ENCODE measurements at regions of chr2 and their contacts with region 1.

Region 1: GRCh38 chr2:189115126-189115525 is 64.4 kb downstream of the COL5A2 start:
- DNase-seq: no peak
- H3K4me3 ChIP-seq: no peak overlapping the region
- H3K27ac ChIP-seq: no peak overlapping the region
- H3K4me1 ChIP-seq: no peaks in the 10 kb centered on the region
- H3K27me3 ChIP-seq: no peaks in the 10 kb centered on the region
- CTCF ChIP-seq: no peak
- EP300 ChIP-seq: no peak
- POLR2A ChIP-seq: no peak
- RAD21 ChIP-seq: peak in 1 of 2 experiments; percentile 14; a peak in 2 of 4 replicates

Region 2: GRCh38 chr2:189129971-189130370 is 14.8 kb after region 1 on chr2:
- CTCF ChIA-PET with region 1: no interaction called
- POLR2A ChIA-PET with region 1: no interaction called
- DNase-seq: no peak
- H3K4me3 ChIP-seq: no peak overlapping the region
- H3K27ac ChIP-seq: no peak overlapping the region
- H3K4me1 ChIP-seq: no peaks in the 10 kb centered on the region
- H3K27me3 ChIP-seq: no peaks in the 10 kb centered on the region
- CTCF ChIP-seq: no peak
- EP300 ChIP-seq: no peak
- POLR2A ChIP-seq: no peak
- RAD21 ChIP-seq: no peak

Region 3: GRCh38 chr2:189318761-189319160 is 203.6 kb after region 1 on chr2:
- CTCF ChIA-PET with region 1: no interaction called
- POLR2A ChIA-PET with region 1: no interaction called
- DNase-seq: no peak
- H3K4me3 ChIP-seq: no peak overlapping the region
- H3K27ac ChIP-seq: no peak overlapping the region
- H3K4me1 ChIP-seq: no peaks in the 10 kb centered on the region
- H3K27me3 ChIP-seq: no peaks in the 10 kb centered on the region
- CTCF ChIP-seq: no peak
- EP300 ChIP-seq: no peak
- POLR2A ChIP-seq: no peak
- RAD21 ChIP-seq: no peak

Region 4: GRCh38 chr2:189412330-189412953 is 297.3 kb after region 1 on chr2:
- CTCF ChIA-PET with region 1: interaction called, 16 read pairs
- POLR2A ChIA-PET with region 1: no interaction called
- DNase-seq: peak in 1 of 2 experiments; percentile 56
- H3K4me3 ChIP-seq: no peak overlapping the region
- H3K27ac ChIP-seq: no peak overlapping the region
- H3K4me1 ChIP-seq: no peaks in the 10 kb centered on the region
- H3K27me3 ChIP-seq: no peaks in the 10 kb centered on the region
- CTCF ChIP-seq: peak in 2 of 3 experiments; percentile 64 to 68; a peak in 3 of 4 replicates
- EP300 ChIP-seq: no peak
- POLR2A ChIP-seq: no peak
- RAD21 ChIP-seq: peak; percentile 91 to 92

Measured in H1 (cell line).